BJ (cell line): ENCODE measurements at regions of chr10 and their contacts with region 1.

Region 1: DNA sequence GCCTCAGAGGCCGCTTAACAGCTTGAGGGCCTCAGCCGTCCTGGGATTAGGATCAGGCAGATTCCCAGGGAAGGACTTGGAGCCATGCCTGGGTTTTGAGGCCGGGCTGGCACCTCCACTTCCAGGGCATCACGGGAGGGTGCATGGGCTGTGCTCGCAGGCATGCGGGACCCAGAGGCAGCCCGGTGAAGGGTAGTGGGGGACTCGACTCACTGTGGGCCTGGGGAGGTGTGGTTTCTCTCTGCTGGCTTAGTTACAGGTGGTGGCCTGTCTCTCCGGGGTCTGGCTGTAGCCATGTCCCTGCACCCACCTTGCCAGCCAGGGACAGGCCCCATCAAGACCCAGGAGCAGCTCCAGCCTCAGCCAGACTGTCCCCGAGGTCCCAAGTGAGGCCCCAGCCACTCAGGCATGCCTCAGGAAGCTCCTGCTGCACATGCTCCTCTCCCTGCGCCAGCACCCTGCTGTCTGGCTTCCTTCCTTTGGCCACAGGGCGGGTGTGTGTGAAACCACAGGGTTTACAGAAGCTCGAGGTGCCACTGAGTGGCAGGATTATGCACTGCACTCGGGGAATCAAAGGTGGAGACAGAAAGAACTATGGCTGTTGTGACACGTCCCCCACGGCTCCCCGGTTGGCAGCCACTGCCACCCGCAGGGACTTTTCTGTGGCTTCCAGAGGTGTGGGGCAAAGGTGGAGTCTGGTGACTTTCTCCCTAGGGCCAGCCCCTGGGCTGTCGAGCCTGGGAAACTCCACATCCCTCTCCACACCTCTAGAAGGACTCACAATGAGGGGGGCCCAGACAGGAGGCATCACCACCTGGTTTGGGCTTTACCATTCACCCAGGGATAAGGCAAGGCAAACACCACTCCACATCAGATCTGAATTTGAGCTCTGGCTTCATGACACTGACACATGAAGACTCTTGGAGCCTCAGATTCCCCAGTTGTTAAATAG is 19.7 kb downstream of the GOLGA7B start:
- DNase-seq: no peak
- H3K4me3 ChIP-seq: no peak overlapping the region
- H3K27me3 ChIP-seq: peaks cover 26% of the 10 kb centered on the region
- CTCF ChIP-seq: peak; percentile 78

Region 2: DNA sequence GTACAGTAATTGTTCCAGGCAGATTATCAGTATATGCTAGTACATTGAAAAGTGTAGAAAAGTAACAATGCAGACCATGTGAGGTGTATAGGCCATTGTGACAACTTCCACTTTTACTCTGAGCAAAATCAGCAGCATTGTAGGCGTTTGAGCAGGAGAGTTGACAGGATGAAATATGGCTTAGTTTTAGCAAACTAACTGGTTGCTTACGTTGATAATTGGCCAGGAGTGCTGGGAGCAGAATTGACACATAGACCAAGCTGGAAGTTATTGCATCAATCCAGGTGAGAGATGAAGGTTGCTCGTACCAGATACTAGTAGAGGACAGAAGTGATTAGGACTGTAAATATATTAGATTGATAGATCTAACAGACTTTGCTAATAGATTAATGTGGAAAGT is 991.3 kb before region 1 on chr10:
- CTCF ChIA-PET with region 1: no interaction called
- POLR2A ChIA-PET with region 1: no interaction called
- DNase-seq: no peak
- H3K4me3 ChIP-seq: no peak overlapping the region
- H3K27me3 ChIP-seq: no peaks in the 10 kb centered on the region
- CTCF ChIP-seq: no peak

Region 3: DNA sequence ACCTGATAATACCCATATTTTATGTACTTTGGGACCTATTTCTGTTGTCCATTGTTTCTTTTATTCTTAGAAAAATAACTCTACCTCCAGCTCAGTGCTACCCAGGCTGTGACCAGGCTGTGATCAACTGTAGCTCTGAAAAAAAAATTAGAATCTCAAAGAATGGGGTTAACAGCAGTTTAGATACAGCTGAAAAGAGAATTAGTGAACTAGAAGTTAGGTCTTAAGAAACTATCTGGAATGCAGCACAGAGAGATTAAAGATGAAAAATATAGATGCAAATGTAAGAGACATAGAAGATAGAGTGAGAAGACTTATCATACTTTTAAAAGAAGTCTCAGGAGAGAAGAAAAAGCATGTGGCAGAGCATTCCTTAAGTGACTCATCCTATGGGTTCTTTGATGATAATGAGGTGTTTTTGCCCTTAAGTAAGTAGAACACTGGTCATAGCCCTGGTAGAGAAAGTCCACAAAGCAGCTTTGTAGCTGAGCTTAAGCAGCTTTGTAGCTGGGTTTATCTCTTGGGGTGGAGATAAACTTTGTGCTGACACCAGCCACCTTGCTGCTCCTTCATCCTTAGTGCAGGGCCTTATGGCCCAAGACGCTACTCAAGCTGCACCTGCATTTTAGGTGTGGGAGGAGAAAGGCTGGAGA is 70.3 kb before region 1 on chr10:
- CTCF ChIA-PET with region 1: interaction called, 160 read pairs
- POLR2A ChIA-PET with region 1: no interaction called
- DNase-seq: no peak
- H3K4me3 ChIP-seq: no peak overlapping the region
- H3K27me3 ChIP-seq: peaks cover 15% of the 10 kb centered on the region
- CTCF ChIP-seq: no peak